GM12878 (cell line): ENCODE measurements at regions of chr7 and their contacts with region 1.

Region 1: DNA sequence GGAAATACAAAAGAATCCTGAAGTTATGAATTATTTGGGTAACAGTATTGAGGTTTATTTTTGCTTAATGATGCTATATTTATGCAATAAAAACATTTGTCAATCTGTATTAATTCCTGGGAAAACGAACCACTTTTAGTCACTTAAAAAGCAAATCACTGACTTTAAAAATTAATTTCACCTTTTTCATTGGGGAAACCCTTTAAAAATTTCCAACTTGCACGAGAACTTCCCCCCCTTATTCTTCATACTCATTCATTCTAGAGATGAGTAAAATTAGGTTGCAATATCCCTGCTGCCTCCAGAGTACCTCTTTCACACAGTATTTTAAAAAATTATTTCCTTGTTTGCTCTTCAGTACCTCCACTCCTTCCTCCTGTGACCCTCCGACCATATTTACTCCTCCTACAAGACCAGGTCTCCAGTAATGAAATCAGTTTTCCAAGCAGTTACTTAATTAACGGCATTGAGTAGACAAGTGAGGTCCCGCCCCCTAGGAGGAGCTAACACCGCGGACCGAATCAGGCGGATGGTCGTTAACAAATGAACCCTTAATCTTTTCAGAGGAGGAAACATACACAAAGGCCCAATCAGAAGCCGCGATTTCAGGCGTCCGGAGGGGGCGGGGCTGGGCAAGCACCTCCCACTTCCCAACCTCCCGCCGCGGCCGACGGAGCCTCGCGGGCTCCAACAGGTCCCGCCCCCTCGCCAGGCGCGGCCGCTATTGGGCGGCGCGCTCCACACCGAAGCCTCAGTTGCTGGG is 465 bp upstream of the TRIM24 start:
- DNase-seq: peak; percentile 92
- ATAC-seq: peak; percentile 89
- H3K4me3 ChIP-seq: peak overlapping the region; percentile 48; the same call in 1 of the 2 replicates
- H3K27ac ChIP-seq: peak overlapping the region; percentile 55
- H3K4me1 ChIP-seq: no peaks in the 10 kb centered on the region
- H3K27me3 ChIP-seq: no peaks in the 10 kb centered on the region
- CTCF ChIP-seq: peak in 2 of 3 experiments; percentile 4 to 23; a peak in 1 of 6 replicates
- EP300 ChIP-seq: no peak
- POLR2A ChIP-seq: no peak
- RAD21 ChIP-seq: 0 out of 2 replicates have a peak, but pooled peaks have one; percentile 1

Region 2: DNA sequence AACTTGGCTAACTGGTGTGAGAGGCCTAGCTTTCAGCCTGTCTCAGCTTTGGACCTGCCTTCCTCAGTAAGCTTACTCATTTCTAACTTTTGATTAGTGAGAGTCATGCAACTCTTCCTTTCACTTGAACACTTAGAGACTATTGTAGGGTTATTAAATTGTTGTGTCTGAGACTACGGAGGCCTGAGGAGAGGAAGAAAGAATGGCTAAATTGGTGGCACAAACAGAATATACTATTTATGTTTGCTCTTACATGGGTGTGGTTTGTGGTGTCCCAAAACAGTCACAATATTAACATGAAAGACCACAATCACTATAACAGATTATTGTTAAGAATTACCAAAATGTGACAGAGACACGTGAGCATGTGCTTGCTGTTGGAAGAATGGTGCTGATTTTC is 82.6 kb after region 1 on chr7:
- CTCF ChIA-PET with region 1: no interaction called
- POLR2A ChIA-PET with region 1: no interaction called
- RAD21 ChIA-PET with region 1: no interaction called
- SMC1A ChIA-PET with region 1: interaction called, 4 read pairs
- in situ Hi-C with region 1: no loop called
- intact Hi-C with region 1: loop called (anchors 5 kb)
- DNase-seq: peak; percentile 62
- ATAC-seq: peak; percentile 95
- H3K4me3 ChIP-seq: no peak overlapping the region
- H3K27ac ChIP-seq: peak overlapping the region; percentile 37; the same call in 1 of the 2 replicates
- H3K4me1 ChIP-seq: peaks cover 9% of the 10 kb centered on the region
- H3K27me3 ChIP-seq: no peaks in the 10 kb centered on the region
- CTCF ChIP-seq: no peak
- EP300 ChIP-seq: peak; percentile 51 to 54; a peak in 2 of 4 replicates
- POLR2A ChIP-seq: no peak
- RAD21 ChIP-seq: no peak

Region 3: GRCh38 chr7:138948108-138948802 is 488.7 kb after region 1 on chr7:
- CTCF ChIA-PET with region 1: no interaction called
- POLR2A ChIA-PET with region 1: no interaction called
- RAD21 ChIA-PET with region 1: no interaction called
- SMC1A ChIA-PET with region 1: no interaction called
- in situ Hi-C with region 1: no loop called
- intact Hi-C with region 1: no loop called
- DNase-seq: peak; percentile 3
- ATAC-seq: peak; percentile 91
- H3K4me3 ChIP-seq: no peak overlapping the region
- H3K27ac ChIP-seq: no peak overlapping the region
- H3K4me1 ChIP-seq: no peaks in the 10 kb centered on the region
- H3K27me3 ChIP-seq: peaks cover 2% of the 10 kb centered on the region in 2 experiments; a peak in 1 of 4 replicates
- CTCF ChIP-seq: no peak
- EP300 ChIP-seq: no peak
- POLR2A ChIP-seq: no peak
- RAD21 ChIP-seq: no peak